Breast epithelium (tissue), 4 donors: ENCODE measurements at regions of chr11 and their contacts with region 1.

Region 1: DNA sequence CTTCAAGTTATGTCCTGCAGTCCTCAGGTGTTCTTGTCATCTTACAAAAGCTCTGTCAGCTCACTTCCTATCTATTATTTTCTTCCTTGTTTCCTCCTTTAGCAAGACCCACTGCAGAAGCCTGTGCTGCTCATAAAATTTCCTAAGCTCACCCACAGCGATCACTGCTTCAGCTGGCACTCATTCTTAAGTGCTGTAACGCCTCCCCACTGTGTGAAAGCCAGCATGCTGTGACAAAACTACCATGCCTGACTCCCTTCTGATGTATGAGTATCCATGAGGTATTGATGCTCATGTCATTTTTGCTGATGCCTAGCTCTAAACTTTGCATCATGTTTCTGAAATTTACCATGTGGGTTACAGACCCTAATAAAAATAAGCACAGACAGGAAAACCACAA is 41.5 kb upstream of the CNTN5 start:
- DNase-seq: no peak
- H3K4me3 ChIP-seq: no peak overlapping the region
- H3K27ac ChIP-seq: no peak overlapping the region
- H3K4me1 ChIP-seq: no peaks in the 10 kb centered on the region
- H3K27me3 ChIP-seq: no peaks in the 10 kb centered on the region
- CTCF ChIP-seq: no peak
- POLR2A ChIP-seq: no peak

Region 2: GRCh38 chr11:98630736-98631135 is 348.5 kb before region 1 on chr11:
- intact Hi-C with region 1: no loop called
- DNase-seq: no peak
- H3K4me3 ChIP-seq: no peak overlapping the region
- H3K27ac ChIP-seq: no peak overlapping the region
- H3K4me1 ChIP-seq: no peaks in the 10 kb centered on the region
- H3K27me3 ChIP-seq: no peaks in the 10 kb centered on the region
- CTCF ChIP-seq: no peak
- POLR2A ChIP-seq: no peak

Region 3: GRCh38 chr11:100174881-100175280 is 1195.7 kb after region 1 on chr11:
- intact Hi-C with region 1: loop called (anchors 5 kb)
- DNase-seq: no peak
- H3K4me3 ChIP-seq: no peak overlapping the region
- H3K27ac ChIP-seq: no peak overlapping the region
- H3K4me1 ChIP-seq: no peaks in the 10 kb centered on the region
- H3K27me3 ChIP-seq: no peaks in the 10 kb centered on the region
- CTCF ChIP-seq: no peak
- POLR2A ChIP-seq: no peak